ENCODE measurements at regions of chr9 and their contacts with region 1.

Region 1: GRCh38 chr9:120928483-120929228 is 2.1 kb upstream of the TRAF1 start:
- DNase-seq: peak; percentile 42 to 89 (median 74)
- ATAC-seq: peak; percentile 22
- H3K4me3 ChIP-seq: peak overlapping the region; percentile 70 to 74
- H3K4me3 Mint-ChIP-seq: peak overlapping the region; percentile 91
- H3K27ac ChIP-seq: peak overlapping the region; percentile 83 to 95
- H3K27ac Mint-ChIP-seq: peak overlapping the region; percentile 98
- H3K4me1 ChIP-seq: peaks cover 86% of the 10 kb centered on the region
- H3K4me1 Mint-ChIP-seq: peaks cover 87% of the 10 kb centered on the region
- H3K27me3 ChIP-seq: no peaks in the 10 kb centered on the region
- H3K27me3 Mint-ChIP-seq: no peaks in the 10 kb centered on the region
- CTCF ChIP-seq: no peak

Region 2: GRCh38 chr9:120792898-120793765 is 135.5 kb before region 1 on chr9 and contains the start of gene FBXW2:
- CTCF ChIA-PET with region 1: interaction called, 3 read pairs
- POLR2A ChIA-PET with region 1: interaction called, 6 read pairs
- intact Hi-C with region 1: loop called in 1 of 2 experiments (anchors 2 kb)
- DNase-seq: peak; percentile 50 to 93 (median 84)
- ATAC-seq: peak; percentile 81
- H3K4me3 ChIP-seq: peak within 1 kb of the TSS; percentile 60 to 88
- H3K4me3 Mint-ChIP-seq: peak within 1 kb of the TSS; percentile 85
- H3K27ac ChIP-seq: peak within 1 kb of the TSS; percentile 88 to 90
- H3K27ac Mint-ChIP-seq: peak within 1 kb of the TSS; percentile 87
- H3K4me1 ChIP-seq: peaks cover 26% of the 10 kb centered on the region
- H3K4me1 Mint-ChIP-seq: peaks cover 60% of the 10 kb centered on the region
- H3K27me3 ChIP-seq: no peaks in the 10 kb centered on the region
- H3K27me3 Mint-ChIP-seq: no peaks in the 10 kb centered on the region
- CTCF ChIP-seq: no peak
- total RNA-seq, gene FBXW2: 51.9 to 54.7 TPM

Region 3: DNA sequence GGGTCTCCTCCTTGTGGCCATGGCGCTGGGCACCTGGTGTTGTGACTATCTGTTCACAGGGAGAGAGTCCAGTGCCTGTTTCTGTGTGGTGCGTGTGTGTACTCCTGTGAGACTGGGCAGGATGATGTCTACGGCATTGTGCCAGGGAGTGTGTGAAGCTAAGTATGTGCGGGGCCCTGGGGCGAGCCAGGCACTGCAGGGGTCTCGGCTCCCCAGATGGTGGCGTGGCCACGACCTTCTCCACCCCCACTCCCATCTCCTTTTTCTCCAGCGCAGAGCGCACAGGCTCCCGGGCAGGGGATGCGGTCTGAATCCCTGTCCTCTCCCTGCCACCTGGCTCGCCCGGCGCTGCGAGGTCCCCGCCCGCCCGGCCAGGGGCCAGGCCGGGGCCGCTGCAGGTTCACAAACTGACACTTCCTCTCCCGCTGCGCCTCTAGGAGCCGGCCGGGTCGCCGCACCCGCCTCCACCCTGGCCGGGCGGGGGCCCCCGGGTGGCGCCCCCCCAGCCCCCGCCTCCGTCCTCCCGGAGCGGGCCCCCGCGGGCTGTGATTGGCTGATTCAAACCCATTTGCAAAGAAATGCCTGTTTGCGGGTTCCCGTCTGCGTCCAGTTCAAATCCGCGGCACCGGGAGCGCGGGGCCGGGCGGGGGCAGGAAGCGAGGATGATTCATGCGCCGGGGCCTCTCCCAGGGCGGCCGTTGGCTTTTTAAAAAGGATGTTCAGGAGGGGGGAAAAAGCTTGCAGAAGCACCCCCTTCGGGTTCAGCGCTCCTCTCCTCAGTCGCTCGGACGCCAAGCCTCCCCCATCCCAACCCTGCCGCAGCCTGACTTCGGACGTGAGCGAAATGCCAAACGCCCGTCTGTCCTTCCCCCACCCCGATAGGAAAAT is 52.5 kb before region 1 on chr9:
- CTCF ChIA-PET with region 1: interaction called, 351 read pairs
- POLR2A ChIA-PET with region 1: interaction called, 54 read pairs
- intact Hi-C with region 1: loop called in 1 of 2 experiments (anchors 1 kb)
- DNase-seq: peak; percentile 28 to 89 (median 85)
- ATAC-seq: peak; percentile 47
- H3K4me3 ChIP-seq: peak overlapping the region; percentile 64 to 76
- H3K4me3 Mint-ChIP-seq: peak overlapping the region; percentile 80
- H3K27ac ChIP-seq: peak overlapping the region; percentile 69 to 85
- H3K27ac Mint-ChIP-seq: peak overlapping the region; percentile 88
- H3K4me1 ChIP-seq: peaks cover 48% of the 10 kb centered on the region
- H3K4me1 Mint-ChIP-seq: peaks cover 56% of the 10 kb centered on the region
- H3K27me3 ChIP-seq: no peaks in the 10 kb centered on the region
- H3K27me3 Mint-ChIP-seq: no peaks in the 10 kb centered on the region
- CTCF ChIP-seq: no peak

Region 4: GRCh38 chr9:120892748-120893610 is 35.7 kb before region 1 on chr9:
- CTCF ChIA-PET with region 1: interaction called, 7 read pairs
- POLR2A ChIA-PET with region 1: interaction called, 1,009 read pairs
- intact Hi-C with region 1: loop called (anchors 1 to 5 kb)
- DNase-seq: peak in 8 of 9 experiments; percentile 46 to 84 (median 70)
- ATAC-seq: peak; percentile 59
- H3K4me3 ChIP-seq: peak overlapping the region in 1 of 2 experiments; percentile 6
- H3K4me3 Mint-ChIP-seq: peak overlapping the region; percentile 30
- H3K27ac ChIP-seq: peak overlapping the region; percentile 68
- H3K27ac Mint-ChIP-seq: peak overlapping the region; percentile 99
- H3K4me1 ChIP-seq: peaks cover 82% of the 10 kb centered on the region
- H3K4me1 Mint-ChIP-seq: peaks cover 68% of the 10 kb centered on the region
- H3K27me3 ChIP-seq: no peaks in the 10 kb centered on the region
- H3K27me3 Mint-ChIP-seq: no peaks in the 10 kb centered on the region
- CTCF ChIP-seq: no peak

Region 5: GRCh38 chr9:120904061-120904977 is 24.3 kb before region 1 on chr9:
- CTCF ChIA-PET with region 1: interaction called, 20 read pairs
- POLR2A ChIA-PET with region 1: interaction called, 1,009 read pairs
- intact Hi-C with region 1: loop called (anchors 2 kb)
- DNase-seq: peak in 8 of 9 experiments; percentile 48 to 91 (median 75)
- ATAC-seq: peak; percentile 83
- H3K4me3 ChIP-seq: no peak overlapping the region
- H3K4me3 Mint-ChIP-seq: peak overlapping the region; percentile 44
- H3K27ac ChIP-seq: peak overlapping the region; percentile 68 to 85
- H3K27ac Mint-ChIP-seq: peak overlapping the region; percentile 93
- H3K4me1 ChIP-seq: peaks cover 77% of the 10 kb centered on the region
- H3K4me1 Mint-ChIP-seq: peaks cover 84% of the 10 kb centered on the region
- H3K27me3 ChIP-seq: no peaks in the 10 kb centered on the region
- H3K27me3 Mint-ChIP-seq: no peaks in the 10 kb centered on the region
- CTCF ChIP-seq: no peak

Region 6: DNA sequence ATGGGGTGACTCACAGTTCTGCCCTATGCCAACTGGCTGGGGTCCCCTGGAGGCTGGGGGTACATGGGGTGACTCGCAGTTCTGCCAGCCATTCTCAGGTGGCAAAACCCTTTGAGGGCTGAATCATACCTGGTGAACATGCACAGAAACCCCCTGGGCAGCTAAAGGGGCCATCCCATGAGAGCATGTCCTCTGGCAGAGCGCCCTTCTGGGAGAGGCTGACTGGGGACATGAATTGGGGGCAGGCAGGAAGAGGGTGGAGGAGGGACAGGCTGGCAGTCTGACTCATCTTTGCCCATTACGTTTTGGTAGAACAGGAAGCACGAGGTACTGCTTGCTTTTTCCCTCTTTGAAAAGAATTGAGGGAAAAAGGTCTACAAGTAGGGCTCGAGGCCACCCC is 18.8 kb before region 1 on chr9:
- CTCF ChIA-PET with region 1: interaction called, 20 read pairs
- POLR2A ChIA-PET with region 1: interaction called, 1,009 read pairs
- intact Hi-C with region 1: loop called (anchors 2 kb)
- DNase-seq: peak in 5 of 9 experiments; percentile 67 to 80 (median 74)
- ATAC-seq: peak; percentile 69
- H3K4me3 ChIP-seq: no peak overlapping the region
- H3K4me3 Mint-ChIP-seq: no peak overlapping the region
- H3K27ac ChIP-seq: peak overlapping the region; percentile 1 to 76
- H3K27ac Mint-ChIP-seq: peak overlapping the region; percentile 86
- H3K4me1 ChIP-seq: peaks cover 61% of the 10 kb centered on the region
- H3K4me1 Mint-ChIP-seq: peaks cover 77% of the 10 kb centered on the region
- H3K27me3 ChIP-seq: no peaks in the 10 kb centered on the region
- H3K27me3 Mint-ChIP-seq: no peaks in the 10 kb centered on the region
- CTCF ChIP-seq: no peak

Region 7: DNA sequence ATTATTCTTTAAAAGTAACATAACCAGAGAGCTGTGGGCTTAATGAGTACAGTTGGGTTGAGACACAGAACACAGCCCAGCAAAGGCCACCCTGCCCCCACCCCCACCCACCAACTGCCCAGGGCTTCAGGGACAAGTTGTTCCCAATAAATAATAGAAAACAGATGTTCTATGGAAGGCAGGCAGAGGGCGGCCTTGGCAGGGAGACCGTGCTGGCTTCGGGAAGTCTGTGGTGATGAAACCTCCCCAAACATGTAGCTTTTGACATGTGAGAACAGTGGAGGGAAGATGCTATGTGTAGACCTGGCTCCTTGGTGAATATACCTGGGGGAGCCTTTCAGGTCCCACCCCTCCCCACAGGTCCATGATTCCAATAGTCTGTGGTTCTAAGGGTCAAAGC is 12.1 kb before region 1 on chr9:
- CTCF ChIA-PET with region 1: interaction called, 16 read pairs
- POLR2A ChIA-PET with region 1: interaction called, 1,009 read pairs
- intact Hi-C with region 1: loop called in 1 of 2 experiments (anchors 1 kb)
- DNase-seq: no peak
- ATAC-seq: no peak
- H3K4me3 ChIP-seq: no peak overlapping the region
- H3K4me3 Mint-ChIP-seq: peak overlapping the region; percentile 16
- H3K27ac ChIP-seq: peak overlapping the region in 1 of 2 experiments; percentile 14
- H3K27ac Mint-ChIP-seq: peak overlapping the region; percentile 90
- H3K4me1 ChIP-seq: peaks cover 73% of the 10 kb centered on the region
- H3K4me1 Mint-ChIP-seq: peaks cover 86% of the 10 kb centered on the region
- H3K27me3 ChIP-seq: no peaks in the 10 kb centered on the region
- H3K27me3 Mint-ChIP-seq: no peaks in the 10 kb centered on the region
- CTCF ChIP-seq: no peak

Measured in CD8-positive, alpha-beta T cell (primary cell).